PC-9 (cell line): ENCODE measurements at regions of chr3 and their contacts with region 1.

Region 1: DNA sequence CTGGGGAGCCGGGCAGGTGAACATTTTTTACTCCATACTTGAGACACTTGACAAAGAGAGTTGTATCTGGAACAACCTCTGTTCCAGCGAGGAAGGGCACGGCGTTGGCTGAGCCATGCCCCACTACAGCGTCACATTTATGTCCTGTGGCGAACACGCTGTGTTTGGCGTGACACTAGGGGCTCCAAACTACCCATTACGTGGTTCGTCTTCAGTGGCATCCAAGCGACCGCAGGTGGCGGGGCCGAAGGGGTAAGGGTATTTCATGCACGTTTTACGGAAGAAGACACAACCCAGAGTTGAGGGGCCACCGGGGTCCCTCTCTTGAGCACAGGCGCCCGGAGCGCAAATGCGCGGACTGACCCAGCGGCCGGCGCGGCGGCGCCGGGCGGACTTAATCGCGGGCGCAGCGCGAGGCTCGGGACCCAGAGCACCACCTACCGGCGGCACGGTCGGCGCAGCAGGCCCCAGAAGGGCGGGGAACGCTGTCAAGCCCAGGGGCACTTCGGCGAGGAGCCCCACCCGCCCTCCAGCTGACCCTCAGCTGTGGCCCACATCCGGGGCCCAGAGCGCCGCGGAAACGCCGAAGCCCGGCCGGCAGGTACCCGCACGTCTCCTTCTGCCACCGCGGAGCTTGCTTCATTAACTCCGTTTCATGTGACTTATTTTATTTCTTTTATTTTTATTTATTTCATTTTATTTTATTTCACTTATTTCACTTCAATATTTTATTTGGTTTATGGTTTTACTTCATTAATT is 36.4 kb upstream of the TRIM71 start:
- DNase-seq: peak; percentile 44 to 83
- H3K4me3 ChIP-seq: peak overlapping the region; percentile 65
- H3K27ac ChIP-seq: no peak overlapping the region
- H3K4me1 ChIP-seq: no peaks in the 10 kb centered on the region
- H3K27me3 ChIP-seq: no peaks in the 10 kb centered on the region
- CTCF ChIP-seq: peak; percentile 57; the same call in 1 of the 2 replicates

Region 2: GRCh38 chr3:32842531-32842931 is 61.1 kb after region 1 on chr3:
- CTCF ChIA-PET with region 1: no interaction called
- POLR2A ChIA-PET with region 1: no interaction called
- intact Hi-C with region 1: no loop called
- DNase-seq: no peak
- H3K4me3 ChIP-seq: no peak overlapping the region
- H3K27ac ChIP-seq: no peak overlapping the region
- H3K4me1 ChIP-seq: peaks cover 13% of the 10 kb centered on the region
- H3K27me3 ChIP-seq: no peaks in the 10 kb centered on the region
- CTCF ChIP-seq: no peak

Region 3: GRCh38 chr3:32901432-32902409 is 120.3 kb after region 1 on chr3:
- CTCF ChIA-PET with region 1: no interaction called
- POLR2A ChIA-PET with region 1: interaction called, 21 read pairs
- intact Hi-C with region 1: loop called (anchors 10 kb)
- DNase-seq: peak in 1 of 2 experiments; percentile 27
- H3K4me3 ChIP-seq: peak overlapping the region; percentile 49; the same call in 1 of the 2 replicates
- H3K27ac ChIP-seq: no peak overlapping the region
- H3K4me1 ChIP-seq: no peaks in the 10 kb centered on the region
- H3K27me3 ChIP-seq: no peaks in the 10 kb centered on the region
- CTCF ChIP-seq: no peak; the same call in 1 of the 2 replicates